ENCODE measurements at regions of chr1 and their contacts with region 1.

Region 1: GRCh38 chr1:201748335-201748734 is 80.6 kb upstream of the IPO9 start:
- DNase-seq: peak; percentile 83 to 86
- ATAC-seq: peak; percentile 62
- H3K4me3 ChIP-seq: no peak overlapping the region
- H3K27ac ChIP-seq: peak overlapping the region; percentile 88 to 99
- H3K4me1 ChIP-seq: peaks cover 3 to 32% of the 10 kb centered on the region in 2 donors
- H3K27me3 ChIP-seq: no peaks in the 10 kb centered on the region

Region 2: DNA sequence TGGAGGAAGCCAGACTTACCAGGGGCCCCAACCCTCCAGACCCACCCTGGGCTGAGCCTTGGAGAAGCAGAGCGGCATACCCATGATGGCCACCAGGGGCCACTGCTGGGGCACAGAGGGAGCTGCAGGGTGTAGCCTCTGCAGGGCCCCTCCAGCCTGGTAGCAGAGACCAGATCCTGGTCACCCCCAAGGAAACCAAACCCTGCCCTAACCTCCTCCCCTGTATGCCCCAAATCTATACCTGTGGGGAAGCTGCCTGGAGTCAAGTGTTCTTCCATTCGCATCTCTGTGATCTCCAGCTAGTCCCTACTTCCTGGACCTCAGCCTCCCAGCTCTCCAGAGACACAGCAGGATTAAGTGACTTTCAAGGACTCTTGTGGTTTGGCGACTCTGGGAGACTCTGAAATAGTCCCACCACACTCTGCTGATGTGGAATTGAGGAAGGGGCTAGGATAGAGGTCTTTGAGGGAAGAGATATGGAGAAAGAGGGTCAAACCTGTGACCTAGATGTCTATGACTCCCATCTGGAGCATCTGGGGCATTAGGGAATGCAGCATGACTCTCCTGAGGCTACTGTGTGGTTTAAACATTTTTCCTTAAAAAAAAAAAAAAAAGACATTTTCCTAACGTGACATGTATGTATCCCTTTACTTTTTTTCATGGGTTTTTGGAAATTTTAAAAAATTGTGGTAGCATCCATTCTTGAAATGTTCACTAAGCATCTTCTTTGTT is 38.6 kb before region 1 on chr1:
- intact Hi-C with region 1: loop called (anchors 2 kb)
- DNase-seq: peak; percentile 81 to 93
- ATAC-seq: peak; percentile 79
- H3K4me3 ChIP-seq: no peak overlapping the region
- H3K27ac ChIP-seq: peak overlapping the region in 1 of 2 donors; percentile 23
- H3K4me1 ChIP-seq: peaks cover 5 to 6% of the 10 kb centered on the region in 2 donors
- H3K27me3 ChIP-seq: no peaks in the 10 kb centered on the region